Naive thymus-derived CD4-positive, alpha-beta T cell (primary cell): ENCODE measurements at regions of chr5 and their contacts with region 1.

Region 1: DNA sequence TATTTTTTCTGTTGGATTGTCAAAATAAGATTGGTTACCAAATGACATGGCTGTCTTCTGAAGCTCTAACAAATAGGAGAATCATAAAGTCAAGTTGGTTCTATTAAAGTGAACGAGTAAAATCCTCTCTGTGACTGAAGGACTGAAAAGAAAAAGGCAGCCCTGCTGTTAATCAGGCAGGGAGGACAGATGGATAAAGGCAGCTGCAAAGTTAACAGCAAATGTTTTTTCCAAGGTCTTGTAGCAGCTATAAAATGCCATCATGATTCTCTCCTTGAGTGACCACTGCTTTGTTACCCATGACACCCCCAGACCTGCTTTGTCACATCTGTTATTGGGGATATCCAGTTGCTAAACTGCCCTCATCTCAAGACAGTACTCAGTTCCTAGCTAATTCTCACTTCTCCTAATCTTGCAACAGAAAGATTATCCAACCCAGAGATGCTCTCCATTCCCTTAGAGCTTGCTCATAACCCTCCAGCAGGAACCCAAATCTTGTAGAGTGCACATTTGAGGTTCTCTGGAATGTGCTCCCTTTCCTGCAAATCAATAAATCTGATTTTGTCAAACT is 89.7 kb upstream of the PARP8 start:
- DNase-seq: no peak
- ATAC-seq: no peak
- H3K4me3 ChIP-seq: no peak overlapping the region
- H3K4me3 Mint-ChIP-seq: no peak overlapping the region
- H3K27ac ChIP-seq: no peak overlapping the region
- H3K27ac Mint-ChIP-seq: peak overlapping the region in 1 of 9 donors; percentile 78
- H3K4me1 ChIP-seq: peaks cover 0 to 20% of the 10 kb centered on the region in 2 donors
- H3K4me1 Mint-ChIP-seq: peaks cover 12 to 30% (median 19%) of the 10 kb centered on the region in 7 donors
- H3K27me3 ChIP-seq: no peaks in the 10 kb centered on the region
- H3K27me3 Mint-ChIP-seq: peaks cover 0 to 6% (median 0%) of the 10 kb centered on the region in 5 donors

Region 2: GRCh38 chr5:50501491-50502228 is 75.1 kb before region 1 on chr5:
- CTCF ChIA-PET with region 1: no interaction called
- POLR2A ChIA-PET with region 1: no interaction called
- intact Hi-C with region 1: no loop called
- DNase-seq: peak in 4 of 9 donors; percentile 3 to 15 (median 7)
- ATAC-seq: peak; percentile 79
- H3K4me3 ChIP-seq: no peak overlapping the region
- H3K4me3 Mint-ChIP-seq: peak overlapping the region in 9 of 10 donors; percentile 14 to 72 (median 67)
- H3K27ac ChIP-seq: no peak overlapping the region
- H3K27ac Mint-ChIP-seq: peak overlapping the region; percentile 45 to 89 (median 78)
- H3K4me1 ChIP-seq: peaks cover 0 to 6% of the 10 kb centered on the region in 2 donors
- H3K4me1 Mint-ChIP-seq: peaks cover 6 to 22% (median 14%) of the 10 kb centered on the region in 7 donors
- H3K27me3 ChIP-seq: no peaks in the 10 kb centered on the region
- H3K27me3 Mint-ChIP-seq: peaks cover 0 to 15% (median 0%) of the 10 kb centered on the region in 5 donors

Region 3: GRCh38 chr5:50606179-50606578 is 29.4 kb after region 1 on chr5:
- CTCF ChIA-PET with region 1: no interaction called
- POLR2A ChIA-PET with region 1: no interaction called
- intact Hi-C with region 1: loop called in 1 of 2 experiments (anchors 5 kb)
- DNase-seq: no peak
- ATAC-seq: no peak
- H3K4me3 ChIP-seq: no peak overlapping the region
- H3K4me3 Mint-ChIP-seq: no peak overlapping the region
- H3K27ac ChIP-seq: no peak overlapping the region
- H3K27ac Mint-ChIP-seq: no peak overlapping the region
- H3K4me1 ChIP-seq: peaks cover 0 to 10% of the 10 kb centered on the region in 2 donors
- H3K4me1 Mint-ChIP-seq: peaks cover 2 to 26% (median 19%) of the 10 kb centered on the region in 7 donors
- H3K27me3 ChIP-seq: no peaks in the 10 kb centered on the region
- H3K27me3 Mint-ChIP-seq: no peaks in the 10 kb centered on the region

Region 4: DNA sequence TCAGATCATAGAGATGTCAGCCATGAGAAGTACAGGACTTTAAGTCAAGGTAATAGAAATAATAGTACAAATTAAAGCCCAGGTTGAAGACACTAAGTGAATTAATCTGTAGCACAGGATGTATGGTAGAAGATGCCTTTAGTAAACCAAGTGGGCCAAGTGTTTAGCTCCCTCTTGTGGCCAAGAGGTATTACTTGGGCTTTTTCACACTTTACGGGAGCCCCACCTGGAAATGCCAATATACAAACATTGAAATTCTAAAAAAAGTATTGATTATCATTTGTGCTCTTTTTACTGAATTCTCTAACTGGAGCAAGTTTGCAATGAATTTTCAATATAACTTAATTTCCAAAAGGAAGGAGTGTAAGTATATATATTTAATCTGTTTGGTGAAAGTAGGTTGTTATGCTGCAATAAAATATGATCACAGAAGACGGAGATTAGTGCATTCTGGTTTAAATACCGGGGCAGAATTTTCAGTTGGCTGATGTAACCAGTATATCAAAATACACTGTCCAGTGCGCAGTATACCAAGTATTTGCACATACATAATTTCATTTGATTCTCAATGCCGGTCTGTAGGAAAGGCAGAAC is 174.4 kb after region 1 on chr5:
- CTCF ChIA-PET with region 1: no interaction called
- POLR2A ChIA-PET with region 1: interaction called, 3 read pairs
- intact Hi-C with region 1: loop called in 1 of 2 experiments (anchors 5 kb)
- DNase-seq: peak in 7 of 9 donors; percentile 58 to 79 (median 69)
- ATAC-seq: peak; percentile 99
- H3K4me3 ChIP-seq: no peak overlapping the region
- H3K4me3 Mint-ChIP-seq: peak overlapping the region in 9 of 10 donors; percentile 37 to 69 (median 61)
- H3K27ac ChIP-seq: no peak overlapping the region
- H3K27ac Mint-ChIP-seq: peak overlapping the region; percentile 68 to 92 (median 89)
- H3K4me1 ChIP-seq: peaks cover 27 to 32% of the 10 kb centered on the region in 2 donors
- H3K4me1 Mint-ChIP-seq: peaks cover 36 to 75% (median 61%) of the 10 kb centered on the region in 7 donors
- H3K27me3 ChIP-seq: no peaks in the 10 kb centered on the region
- H3K27me3 Mint-ChIP-seq: no peaks in the 10 kb centered on the region